B cell (primary cell): ENCODE measurements at regions of chr21 and their contacts with region 1.

Region 1: GRCh38 chr21:29002442-29003144 is 9.9 kb upstream of the LTN1 start:
- DNase-seq: peak; percentile 96
- ATAC-seq: peak; percentile 100
- H3K4me3 ChIP-seq: peak overlapping the region; percentile 65 to 96 (median 76)
- H3K4me3 Mint-ChIP-seq: peak overlapping the region; percentile 98
- H3K27ac ChIP-seq: peak overlapping the region; percentile 90 to 95
- H3K27ac Mint-ChIP-seq: peak overlapping the region; percentile 98
- H3K4me1 ChIP-seq: peaks cover 4 to 12% of the 10 kb centered on the region in 2 donors
- H3K4me1 Mint-ChIP-seq: peaks cover 12% of the 10 kb centered on the region
- H3K27me3 ChIP-seq: no peaks in the 10 kb centered on the region
- H3K27me3 Mint-ChIP-seq: no peaks in the 10 kb centered on the region
- CTCF ChIP-seq: no peak

Region 2: DNA sequence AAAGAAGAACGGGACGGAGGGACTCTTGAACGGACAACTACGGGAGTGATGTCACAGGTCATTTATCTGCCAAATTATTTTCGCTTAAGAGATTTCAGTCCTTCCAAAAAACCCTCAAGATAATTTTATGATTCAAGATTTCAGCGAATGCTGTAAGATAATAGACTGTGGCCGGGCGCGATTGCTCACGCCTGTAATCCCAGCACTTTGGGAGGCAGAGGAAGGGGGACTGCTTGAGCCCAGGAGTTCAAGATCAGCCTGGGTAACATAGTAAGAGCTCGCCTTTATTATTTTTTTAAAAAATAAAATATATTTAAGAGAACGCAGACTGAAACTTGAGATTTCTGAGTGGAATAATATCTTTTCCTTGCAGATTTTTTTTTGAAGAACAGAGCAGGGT is 15.9 kb after region 1 on chr21:
- CTCF ChIA-PET with region 1: interaction called, 16 read pairs
- POLR2A ChIA-PET with region 1: interaction called, 35 read pairs
- intact Hi-C with region 1: loop called (anchors 1 kb)
- DNase-seq: no peak
- ATAC-seq: no peak
- H3K4me3 ChIP-seq: peak overlapping the region; percentile 74 to 91 (median 81)
- H3K4me3 Mint-ChIP-seq: peak overlapping the region; percentile 95
- H3K27ac ChIP-seq: peak overlapping the region; percentile 73 to 92
- H3K27ac Mint-ChIP-seq: peak overlapping the region; percentile 96
- H3K4me1 ChIP-seq: peaks cover 14 to 18% of the 10 kb centered on the region in 2 donors
- H3K4me1 Mint-ChIP-seq: peaks cover 22% of the 10 kb centered on the region
- H3K27me3 ChIP-seq: no peaks in the 10 kb centered on the region
- H3K27me3 Mint-ChIP-seq: no peaks in the 10 kb centered on the region
- CTCF ChIP-seq: no peak

Region 3: DNA sequence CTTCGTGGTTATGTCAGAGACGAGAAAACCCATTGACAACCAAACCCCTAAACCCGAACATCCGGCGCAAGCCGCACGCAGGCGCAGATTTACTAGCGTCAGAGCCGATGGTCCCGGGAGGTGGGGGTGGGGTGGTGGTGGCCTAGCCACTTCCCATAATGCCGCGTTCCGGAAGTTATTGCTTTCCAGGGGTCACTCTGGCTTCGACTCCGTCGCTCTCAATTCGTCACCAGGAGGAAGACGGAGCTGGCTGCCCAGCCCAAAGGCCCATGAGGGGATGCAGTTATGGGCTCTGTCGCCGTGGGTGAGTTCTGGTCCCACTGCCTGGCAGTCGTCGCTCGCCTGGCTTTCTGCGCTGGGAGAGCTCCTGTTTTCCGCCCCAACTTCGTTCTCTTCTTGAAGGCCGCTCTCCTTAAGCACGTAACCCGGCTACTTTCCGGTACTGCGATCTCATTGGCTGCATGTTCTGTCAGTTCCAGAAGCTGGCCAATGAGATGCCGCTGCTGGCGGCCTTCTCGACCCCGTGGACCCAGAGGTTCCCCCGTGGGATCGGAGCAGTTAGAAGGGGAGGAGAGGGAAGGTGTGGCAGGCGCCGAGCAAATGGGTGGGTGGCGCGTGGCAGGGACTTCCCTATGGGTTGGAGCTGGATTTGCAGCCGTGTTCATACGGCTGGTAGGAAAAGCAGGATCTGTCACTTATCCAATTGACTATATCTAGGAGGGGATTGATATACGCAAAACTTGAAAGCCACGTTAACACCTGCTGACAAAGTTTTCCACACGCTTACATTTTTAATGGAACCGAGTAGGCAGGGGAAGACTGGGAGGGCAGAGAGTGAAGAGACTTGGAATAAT is 22.1 kb after region 1 on chr21 and contains the start of gene USP16:
- CTCF ChIA-PET with region 1: interaction called, 16 read pairs
- POLR2A ChIA-PET with region 1: interaction called, 35 read pairs
- intact Hi-C with region 1: loop called (anchors 1 kb)
- DNase-seq: peak; percentile 99
- ATAC-seq: peak; percentile 93
- H3K4me3 ChIP-seq: peak within 1 kb of the TSS; percentile 58 to 90 (median 74)
- H3K4me3 Mint-ChIP-seq: peak within 1 kb of the TSS; percentile 95
- H3K27ac ChIP-seq: peak within 1 kb of the TSS; percentile 97 to 98
- H3K27ac Mint-ChIP-seq: peak within 1 kb of the TSS; percentile 99
- H3K4me1 ChIP-seq: peaks cover 16 to 17% of the 10 kb centered on the region in 2 donors
- H3K4me1 Mint-ChIP-seq: peaks cover 40% of the 10 kb centered on the region
- H3K27me3 ChIP-seq: no peaks in the 10 kb centered on the region
- H3K27me3 Mint-ChIP-seq: no peaks in the 10 kb centered on the region
- CTCF ChIP-seq: no peak
- total RNA-seq, gene USP16: 54.7 and 55.7 TPM in 2 replicates

Region 4: DNA sequence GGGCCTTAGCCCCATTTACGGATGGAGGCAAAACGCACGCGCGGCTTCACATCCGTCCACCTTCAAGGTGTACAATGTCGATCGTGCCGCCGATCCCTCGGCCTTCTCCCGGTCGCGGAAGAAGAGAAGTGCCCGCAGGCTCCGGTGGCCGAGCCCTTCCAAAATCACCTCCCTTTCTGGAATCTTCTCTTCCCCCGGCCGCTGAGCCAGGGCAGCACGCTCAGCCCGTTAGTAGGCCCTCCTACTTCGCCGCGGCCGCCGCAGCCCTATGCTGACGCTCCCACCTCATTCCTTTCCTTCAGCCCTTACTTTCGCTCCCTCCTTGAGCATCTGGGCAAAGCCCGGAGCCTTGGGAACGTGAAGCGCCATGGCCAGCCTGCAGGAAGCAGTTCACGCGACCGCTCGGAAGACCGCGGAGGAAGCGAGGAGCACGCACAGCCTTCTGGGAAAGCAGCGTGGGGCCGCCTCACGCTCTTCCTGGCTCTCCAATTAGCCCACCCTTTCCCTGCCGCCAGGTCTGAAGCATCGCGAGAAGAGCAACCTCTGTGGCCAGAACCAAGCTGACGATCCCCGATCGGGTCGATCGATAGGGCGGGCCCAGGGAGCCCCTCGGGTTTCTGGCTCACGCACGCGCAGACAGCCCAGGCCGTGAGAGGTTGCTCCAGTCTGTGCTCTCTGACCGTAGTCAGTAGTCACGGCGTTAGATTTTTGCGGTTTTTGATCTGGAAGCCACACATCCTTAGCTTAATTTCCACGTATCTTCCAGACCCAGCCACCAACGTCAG is 70.8 kb after region 1 on chr21 and contains the start of gene CCT8:
- CTCF ChIA-PET with region 1: interaction called, 5 read pairs
- POLR2A ChIA-PET with region 1: interaction called, 8 read pairs
- intact Hi-C with region 1: loop called (anchors 1 kb)
- DNase-seq: peak; percentile 99
- ATAC-seq: peak; percentile 91
- H3K4me3 ChIP-seq: peak within 1 kb of the TSS; percentile 72 to 99 (median 98)
- H3K4me3 Mint-ChIP-seq: peak within 1 kb of the TSS; percentile 99
- H3K27ac ChIP-seq: peak within 1 kb of the TSS; percentile 80 to 86
- H3K27ac Mint-ChIP-seq: peak within 1 kb of the TSS; percentile 96
- H3K4me1 ChIP-seq: peaks cover 27 to 33% of the 10 kb centered on the region in 2 donors
- H3K4me1 Mint-ChIP-seq: peaks cover 57% of the 10 kb centered on the region
- H3K27me3 ChIP-seq: no peaks in the 10 kb centered on the region
- H3K27me3 Mint-ChIP-seq: no peaks in the 10 kb centered on the region
- CTCF ChIP-seq: no peak
- total RNA-seq, gene CCT8: 92.8 and 100 TPM in 2 replicates